CD14-positive monocyte (primary cell): ENCODE measurements at regions of chrX and their contacts with region 1.

Region 1: GRCh38 chrX:65581661-65582339 is 47.2 kb upstream of the LAS1L start:
- DNase-seq: peak; percentile 54 to 67 (median 62)
- H3K4me3 ChIP-seq: no peak overlapping the region
- H3K4me3 Mint-ChIP-seq: no peak overlapping the region
- H3K27ac ChIP-seq: no peak overlapping the region
- H3K27ac Mint-ChIP-seq: peak overlapping the region in 1 of 7 donors; percentile 72
- H3K4me1 ChIP-seq: peaks cover 5 to 8% of the 10 kb centered on the region in 2 donors
- H3K4me1 Mint-ChIP-seq: peaks cover 2% of the 10 kb centered on the region
- H3K27me3 ChIP-seq: peaks cover 0 to 14% of the 10 kb centered on the region in 2 donors
- H3K27me3 Mint-ChIP-seq: peaks cover under 1 to 50% (median 1%) of the 10 kb centered on the region in 3 donors
- CTCF ChIP-seq: peak; percentile 67

Region 2: DNA sequence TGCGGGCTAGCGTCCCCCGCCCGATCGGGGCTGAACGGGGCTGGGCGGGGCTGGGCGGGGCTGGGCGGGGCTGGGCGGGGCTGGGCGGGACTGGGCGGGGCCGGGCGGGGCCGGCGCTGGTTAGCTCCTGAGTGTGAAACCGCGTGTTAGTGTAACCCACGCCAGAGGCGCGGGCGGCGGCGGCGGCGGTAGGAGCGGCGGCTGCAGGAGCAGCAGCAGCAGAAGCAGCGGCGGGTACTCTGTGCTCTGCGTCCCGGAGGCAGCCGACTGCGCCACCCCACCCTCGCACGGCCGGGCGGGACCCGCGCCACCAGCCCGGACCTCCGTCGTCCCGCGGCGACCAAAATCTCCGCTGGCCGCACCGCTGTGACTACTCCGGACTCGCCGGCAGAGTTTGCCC is 175.3 kb before region 1 on chrX:
- intact Hi-C with region 1: no loop called
- DNase-seq: peak in 1 of 3 donors; percentile 2
- H3K4me3 ChIP-seq: peak overlapping the region in 1 of 3 experiments; percentile 48
- H3K4me3 Mint-ChIP-seq: peak overlapping the region; percentile 69 to 84
- H3K27ac ChIP-seq: no peak overlapping the region
- H3K27ac Mint-ChIP-seq: no peak overlapping the region
- H3K4me1 ChIP-seq: no peaks in the 10 kb centered on the region
- H3K4me1 Mint-ChIP-seq: peaks cover 8% of the 10 kb centered on the region
- H3K27me3 ChIP-seq: peaks cover 18 to 30% of the 10 kb centered on the region in 2 donors
- H3K27me3 Mint-ChIP-seq: peaks cover 30 to 63% (median 41%) of the 10 kb centered on the region in 3 donors
- CTCF ChIP-seq: no peak

Region 3: DNA sequence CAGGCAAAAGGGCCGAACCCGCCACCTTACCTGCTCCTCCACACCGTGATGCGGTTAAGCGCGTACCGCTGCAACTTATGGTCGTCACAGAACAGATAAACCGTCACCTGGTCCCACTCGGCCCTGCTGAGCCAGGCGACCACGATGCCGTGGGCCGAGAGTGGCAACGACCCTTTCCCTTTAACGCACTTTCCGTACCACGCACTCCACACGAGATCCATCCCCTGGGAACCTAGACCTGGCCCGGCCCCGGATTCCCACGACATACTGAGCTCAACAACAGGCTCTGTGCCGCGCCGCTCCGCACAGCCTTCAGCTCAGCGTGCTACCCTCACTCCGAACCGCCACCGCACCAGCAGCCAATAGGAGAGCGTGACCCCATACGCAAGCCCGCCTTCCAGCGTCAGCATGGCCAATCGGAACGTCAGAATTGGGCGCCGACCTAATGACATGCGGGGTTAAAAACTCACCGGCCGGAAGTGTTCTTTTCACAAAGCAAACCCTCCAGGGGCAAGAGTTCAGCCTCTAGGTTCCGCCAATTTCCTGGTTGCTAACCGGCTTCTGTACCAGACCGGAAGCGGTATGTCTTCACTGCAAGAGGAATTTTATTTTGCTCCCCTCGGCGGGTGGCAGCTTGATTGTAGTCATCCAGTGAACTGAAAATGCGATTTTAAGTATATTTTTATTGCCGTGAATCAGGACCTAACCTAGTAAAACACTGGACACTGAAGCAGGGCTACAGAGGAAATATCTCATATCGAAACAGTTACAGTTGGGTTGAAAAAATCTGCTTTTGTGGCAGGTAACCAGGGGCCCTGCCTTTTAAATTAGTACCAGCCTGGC is 47.1 kb before region 1 on chrX and contains the start of gene LAS1L:
- intact Hi-C with region 1: no loop called
- DNase-seq: peak; percentile 90 to 92 (median 91)
- H3K4me3 ChIP-seq: peak within 1 kb of the TSS; percentile 50 to 84 (median 80)
- H3K4me3 Mint-ChIP-seq: peak within 1 kb of the TSS; percentile 98 to 100
- H3K27ac ChIP-seq: peak within 1 kb of the TSS; percentile 46 to 50
- H3K27ac Mint-ChIP-seq: peak within 1 kb of the TSS; percentile 86 to 93 (median 91)
- H3K4me1 ChIP-seq: peaks cover 13 to 15% of the 10 kb centered on the region in 2 donors
- H3K4me1 Mint-ChIP-seq: peaks cover 13% of the 10 kb centered on the region
- H3K27me3 ChIP-seq: no peaks in the 10 kb centered on the region
- H3K27me3 Mint-ChIP-seq: peaks cover 0 to 18% (median 0%) of the 10 kb centered on the region in 3 donors
- CTCF ChIP-seq: no peak
- polyA plus RNA-seq, gene LAS1L: 15.9 to 17.1 (median 17.1) TPM

Region 4: DNA sequence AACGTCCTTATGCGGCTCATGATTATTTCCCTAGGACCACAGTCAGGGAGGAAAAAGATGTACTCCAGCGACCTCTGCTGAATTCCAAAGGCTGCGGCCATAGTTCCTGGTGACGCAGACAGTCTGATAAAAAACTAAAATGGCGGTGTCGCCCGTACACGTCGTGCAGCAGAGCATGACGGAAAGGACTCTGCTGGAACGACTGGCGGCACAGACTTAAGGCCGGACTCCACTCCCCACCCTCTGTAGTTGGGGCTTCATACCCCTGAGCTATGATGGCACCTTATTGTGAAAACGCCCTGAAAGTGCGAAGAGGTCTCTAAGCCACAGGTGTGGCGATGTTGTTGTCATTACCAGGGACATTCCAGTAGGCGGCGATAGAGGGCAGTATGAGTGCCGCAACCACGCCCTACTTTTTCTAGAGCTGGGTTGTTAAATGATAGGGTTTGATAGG is 1147.0 kb after region 1 on chrX:
- intact Hi-C with region 1: loop called in 1 of 2 experiments (anchors 10 kb)
- DNase-seq: peak in 2 of 3 donors; percentile 2 to 8
- H3K4me3 ChIP-seq: peak overlapping the region; percentile 35 to 65 (median 38)
- H3K4me3 Mint-ChIP-seq: peak overlapping the region; percentile 84 to 92
- H3K27ac ChIP-seq: no peak overlapping the region
- H3K27ac Mint-ChIP-seq: peak overlapping the region in 3 of 7 donors; percentile 66 to 89 (median 78)
- H3K4me1 ChIP-seq: no peaks in the 10 kb centered on the region
- H3K4me1 Mint-ChIP-seq: peaks cover 6% of the 10 kb centered on the region
- H3K27me3 ChIP-seq: no peaks in the 10 kb centered on the region
- H3K27me3 Mint-ChIP-seq: peaks cover 0 to 4% (median 1%) of the 10 kb centered on the region in 3 donors
- CTCF ChIP-seq: peak; percentile 65